Activated CD4-positive, alpha-beta T cell treated with anti-CD3 and anti-CD28 coated beads for 36 hours (primary cell): ENCODE measurements at regions of chr11 and their contacts with region 1.

Region 1: GRCh38 chr11:109062445-109062844 is 359.5 kb upstream of the C11orf87 start:
- DNase-seq: no peak
- ATAC-seq: no peak
- H3K4me3 Mint-ChIP-seq: no peak overlapping the region
- H3K27ac Mint-ChIP-seq: no peak overlapping the region
- H3K4me1 Mint-ChIP-seq: peaks cover 6% of the 10 kb centered on the region
- H3K27me3 Mint-ChIP-seq: no peaks in the 10 kb centered on the region

Region 2: DNA sequence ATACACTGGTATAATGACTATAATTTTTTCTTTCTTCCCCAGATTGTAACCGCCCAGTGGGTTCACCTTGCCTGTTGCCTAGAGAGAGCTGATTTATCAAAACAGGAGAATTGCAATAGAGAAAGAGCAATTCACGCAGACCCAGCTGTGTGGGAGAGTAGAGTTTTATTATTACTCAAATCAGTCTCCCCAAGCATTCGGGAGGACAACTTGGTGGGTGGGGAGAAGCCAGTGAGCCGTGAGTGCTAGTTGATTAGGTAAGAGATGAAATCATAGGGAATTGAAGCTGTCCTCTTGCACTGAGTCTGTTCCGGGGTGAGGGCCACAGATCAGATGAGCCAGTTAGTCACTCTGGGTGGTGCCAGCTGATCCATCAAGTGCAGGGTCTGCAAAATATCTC is 1277.0 kb before region 1 on chr11:
- CTCF ChIA-PET with region 1: no interaction called
- POLR2A ChIA-PET with region 1: no interaction called
- intact Hi-C with region 1: no loop called
- DNase-seq: peak; percentile 67
- ATAC-seq: peak; percentile 96
- H3K4me3 Mint-ChIP-seq: no peak overlapping the region
- H3K27ac Mint-ChIP-seq: no peak overlapping the region
- H3K4me1 Mint-ChIP-seq: peaks cover 10% of the 10 kb centered on the region
- H3K27me3 Mint-ChIP-seq: no peaks in the 10 kb centered on the region

Region 3: DNA sequence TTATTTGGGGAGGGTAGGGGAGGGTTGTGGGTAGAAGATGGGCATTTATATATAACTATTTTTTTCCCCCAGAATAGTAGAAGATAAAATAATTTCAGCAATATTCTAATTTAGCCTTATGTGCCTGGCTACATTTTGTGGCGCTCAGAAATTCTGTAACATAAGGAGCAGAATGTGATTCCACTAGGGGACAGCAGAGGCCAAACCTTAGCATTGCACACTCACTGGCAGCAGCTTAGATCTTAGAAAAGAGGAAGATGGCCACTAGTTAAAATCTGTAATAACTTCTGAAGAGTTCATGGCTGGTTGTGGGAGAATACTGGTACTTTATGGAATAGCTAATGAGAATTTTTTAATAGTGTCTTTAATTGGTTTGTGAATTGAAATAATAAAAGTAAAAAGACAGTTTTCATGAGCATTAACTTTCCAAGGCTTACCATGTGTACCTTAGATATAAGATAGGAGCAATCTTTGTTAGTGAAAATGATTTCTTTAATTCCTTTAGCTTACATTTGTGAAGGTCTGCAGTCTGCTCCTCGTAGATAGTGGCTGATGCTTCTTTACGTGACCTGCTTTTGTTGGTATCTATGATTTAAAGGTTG is 364.5 kb before region 1 on chr11:
- CTCF ChIA-PET with region 1: no interaction called
- POLR2A ChIA-PET with region 1: no interaction called
- intact Hi-C with region 1: no loop called
- DNase-seq: peak; percentile 66
- ATAC-seq: peak; percentile 73
- H3K4me3 Mint-ChIP-seq: no peak overlapping the region
- H3K27ac Mint-ChIP-seq: no peak overlapping the region
- H3K4me1 Mint-ChIP-seq: no peaks in the 10 kb centered on the region
- H3K27me3 Mint-ChIP-seq: no peaks in the 10 kb centered on the region

Region 4: GRCh38 chr11:108871152-108871551 is 191.3 kb before region 1 on chr11:
- CTCF ChIA-PET with region 1: no interaction called
- POLR2A ChIA-PET with region 1: interaction called, 18 read pairs
- intact Hi-C with region 1: no loop called
- DNase-seq: peak; percentile 59
- ATAC-seq: peak; percentile 47
- H3K4me3 Mint-ChIP-seq: no peak overlapping the region
- H3K27ac Mint-ChIP-seq: no peak overlapping the region
- H3K4me1 Mint-ChIP-seq: peaks cover 24% of the 10 kb centered on the region
- H3K27me3 Mint-ChIP-seq: no peaks in the 10 kb centered on the region

Region 5: DNA sequence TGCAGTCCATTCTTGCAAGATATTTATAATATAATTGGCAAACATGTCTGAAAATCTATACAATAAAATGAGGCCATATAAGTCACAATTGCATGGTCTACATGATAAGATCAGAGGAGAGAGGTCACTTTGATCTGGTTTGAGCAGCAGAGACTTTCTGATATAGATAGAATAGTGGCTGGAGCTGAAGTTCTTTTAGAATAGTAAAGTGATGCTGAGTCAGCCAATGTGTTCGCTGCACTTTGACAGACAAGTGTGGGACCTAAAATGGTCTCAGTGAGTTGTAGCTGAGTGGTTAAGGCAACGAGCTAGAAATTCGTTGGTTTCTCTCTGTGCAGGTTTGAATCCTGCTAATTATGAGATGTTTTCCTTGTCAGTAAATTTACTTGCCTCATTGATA is 102.6 kb after region 1 on chr11:
- CTCF ChIA-PET with region 1: no interaction called
- POLR2A ChIA-PET with region 1: no interaction called
- intact Hi-C with region 1: no loop called
- DNase-seq: no peak
- ATAC-seq: no peak
- H3K4me3 Mint-ChIP-seq: no peak overlapping the region
- H3K27ac Mint-ChIP-seq: no peak overlapping the region
- H3K4me1 Mint-ChIP-seq: no peaks in the 10 kb centered on the region
- H3K27me3 Mint-ChIP-seq: no peaks in the 10 kb centered on the region

Region 6: GRCh38 chr11:109383306-109383705 is 320.9 kb after region 1 on chr11:
- CTCF ChIA-PET with region 1: no interaction called
- POLR2A ChIA-PET with region 1: no interaction called
- intact Hi-C with region 1: no loop called
- DNase-seq: no peak
- ATAC-seq: no peak
- H3K4me3 Mint-ChIP-seq: no peak overlapping the region
- H3K27ac Mint-ChIP-seq: no peak overlapping the region
- H3K4me1 Mint-ChIP-seq: no peaks in the 10 kb centered on the region
- H3K27me3 Mint-ChIP-seq: no peaks in the 10 kb centered on the region